Activated CD8-positive, alpha-beta memory T cell treated with anti-CD3 and anti-CD28 coated beads, Interleukin-2, amount 10 ng/mL, durations not matched to agents 7 days and 5 days (primary cell): ENCODE measurements at regions of chr10 and their contacts with region 1.

Region 1: DNA sequence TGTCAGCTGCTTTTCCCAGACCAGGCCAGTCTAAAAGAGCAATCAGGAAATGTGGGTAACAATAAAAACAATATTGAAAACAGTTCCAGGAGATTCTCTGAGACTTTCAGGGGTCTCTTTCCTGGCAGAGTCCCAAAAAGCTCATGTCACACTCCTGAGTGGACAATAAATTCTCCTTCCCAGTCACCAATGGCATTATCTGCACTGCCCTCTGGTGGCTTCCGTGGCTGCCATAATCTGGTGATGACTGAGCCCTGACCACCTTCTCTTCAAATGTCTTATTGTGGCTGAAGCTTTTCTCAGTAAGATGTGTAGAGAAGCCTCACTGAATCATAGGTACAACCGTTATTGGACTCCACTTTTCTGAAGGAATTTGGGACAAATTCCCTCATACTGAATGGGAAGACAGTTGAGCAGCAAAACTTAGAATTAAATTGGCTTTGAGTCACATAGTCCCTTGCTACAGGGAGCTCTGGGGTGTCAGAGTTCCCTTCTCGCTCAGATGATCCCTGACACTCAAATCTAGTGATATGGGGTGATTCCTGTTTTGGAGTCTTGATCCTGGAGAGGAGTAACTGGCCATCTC is 24.4 kb upstream of the ASAH2 start:
- DNase-seq: peak; percentile 64
- ATAC-seq: peak; percentile 69
- H3K4me3 Mint-ChIP-seq: no peak overlapping the region
- H3K27ac Mint-ChIP-seq: no peak overlapping the region
- H3K4me1 Mint-ChIP-seq: peaks cover 5% of the 10 kb centered on the region
- H3K27me3 Mint-ChIP-seq: peaks cover 40% of the 10 kb centered on the region

Region 2: GRCh38 chr10:49592726-49593563 is 682.8 kb before region 1 on chr10:
- CTCF ChIA-PET with region 1: interaction called, 10 read pairs
- DNase-seq: peak; percentile 70
- ATAC-seq: peak; percentile 75
- H3K4me3 Mint-ChIP-seq: no peak overlapping the region
- H3K27ac Mint-ChIP-seq: no peak overlapping the region
- H3K4me1 Mint-ChIP-seq: no peaks in the 10 kb centered on the region
- H3K27me3 Mint-ChIP-seq: peaks cover 26% of the 10 kb centered on the region

Region 3: DNA sequence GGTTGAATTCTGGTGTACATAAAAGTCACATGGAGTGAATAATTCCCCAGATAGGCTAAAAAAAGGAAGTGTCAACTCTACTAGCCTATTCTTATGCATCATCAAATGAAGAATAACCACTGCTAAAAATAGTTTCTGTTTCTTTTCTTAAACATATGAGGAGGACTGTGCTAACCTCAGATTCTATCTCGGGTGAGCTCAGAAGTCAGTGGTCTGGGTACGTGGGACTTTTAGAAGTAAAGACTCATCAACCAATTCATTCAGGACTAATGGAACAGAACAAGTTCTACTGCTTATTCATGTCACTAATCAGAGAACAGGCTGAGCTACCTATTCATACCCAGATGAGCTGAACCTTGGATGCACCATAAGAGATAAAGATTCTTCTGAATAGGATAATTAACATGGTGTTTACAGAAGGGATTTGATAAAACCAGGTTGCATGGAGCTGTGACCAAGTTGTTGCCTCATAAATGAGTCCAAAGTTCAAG is 14.9 kb before region 1 on chr10:
- CTCF ChIA-PET with region 1: interaction called, 12 read pairs
- DNase-seq: peak; percentile 78
- ATAC-seq: peak; percentile 96
- H3K4me3 Mint-ChIP-seq: no peak overlapping the region
- H3K27ac Mint-ChIP-seq: peak overlapping the region; percentile 65
- H3K4me1 Mint-ChIP-seq: peaks cover 29% of the 10 kb centered on the region
- H3K27me3 Mint-ChIP-seq: peaks cover 44% of the 10 kb centered on the region